Naive thymus-derived CD8-positive, alpha-beta T cell (primary cell): ENCODE measurements at regions of chr1 and their contacts with region 1.

Region 1: GRCh38 chr1:172380441-172381244 is 39.8 kb upstream of the C1orf105 start:
- DNase-seq: peak in 9 of 10 donors; percentile 19 to 80 (median 31)
- ATAC-seq: peak; percentile 97 to 98
- H3K4me3 Mint-ChIP-seq: peak overlapping the region; percentile 63 to 82 (median 71)
- H3K27ac Mint-ChIP-seq: peak overlapping the region; percentile 41 to 96 (median 92)
- H3K4me1 Mint-ChIP-seq: peaks cover 6 to 49% (median 33%) of the 10 kb centered on the region in 4 donors
- H3K27me3 Mint-ChIP-seq: no peaks in the 10 kb centered on the region

Region 2: DNA sequence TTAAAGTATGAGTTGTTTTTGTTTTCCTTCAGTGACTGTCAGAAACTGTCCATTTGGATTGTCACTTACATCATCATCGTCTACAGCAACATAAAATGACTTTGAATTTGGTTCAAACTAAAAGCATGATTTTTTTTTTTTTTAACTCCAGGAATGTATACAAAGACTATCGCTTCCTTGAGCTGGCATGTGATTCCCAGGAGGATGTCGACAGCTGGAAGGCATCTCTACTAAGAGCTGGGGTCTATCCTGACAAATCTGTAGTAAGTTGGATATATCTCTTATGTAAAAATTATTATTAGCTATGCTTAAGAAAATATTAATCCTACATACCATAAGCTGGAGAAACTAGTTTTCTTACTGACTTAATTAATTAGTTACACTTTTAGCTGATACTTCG is 72.1 kb before region 1 on chr1:
- POLR2A ChIA-PET with region 1: no interaction called
- DNase-seq: no peak
- ATAC-seq: no peak
- H3K4me3 Mint-ChIP-seq: no peak overlapping the region
- H3K27ac Mint-ChIP-seq: no peak overlapping the region
- H3K4me1 Mint-ChIP-seq: peaks cover 0 to 4% (median 2%) of the 10 kb centered on the region in 4 donors
- H3K27me3 Mint-ChIP-seq: no peaks in the 10 kb centered on the region

Region 3: DNA sequence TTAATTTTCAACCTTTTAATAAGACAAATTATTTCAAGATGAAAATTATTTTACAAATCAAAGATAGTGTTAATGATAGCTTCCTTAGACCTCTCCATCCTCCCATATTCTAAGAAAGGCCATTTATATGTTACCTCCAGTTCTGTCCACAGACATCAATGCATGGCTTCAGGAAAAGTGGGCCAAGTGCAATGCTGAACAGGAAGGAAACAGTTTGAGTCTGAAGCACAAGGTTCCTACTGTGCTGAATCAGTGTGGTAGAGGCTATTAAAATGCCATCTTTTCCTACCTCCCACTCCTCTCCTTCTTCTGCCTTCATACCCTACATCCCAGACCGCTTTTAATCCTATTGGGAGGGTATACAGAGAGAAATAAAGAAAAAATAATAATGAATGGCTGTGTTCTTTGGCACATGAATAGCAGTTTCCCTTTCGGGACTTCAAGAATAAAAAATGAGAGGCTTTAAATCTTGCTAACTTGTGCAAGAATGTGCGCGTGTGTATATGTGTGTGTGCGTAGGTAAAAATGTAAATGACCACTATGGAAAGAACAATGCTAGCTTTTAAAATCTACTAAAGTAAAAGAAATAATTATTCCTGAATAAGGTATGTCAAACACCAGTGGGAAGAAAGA is 22.8 kb before region 1 on chr1:
- POLR2A ChIA-PET with region 1: interaction called, 11 read pairs
- DNase-seq: no peak
- ATAC-seq: peak; percentile 37 to 46
- H3K4me3 Mint-ChIP-seq: peak overlapping the region; percentile 38 to 75 (median 66)
- H3K27ac Mint-ChIP-seq: peak overlapping the region; percentile 4 to 94 (median 82)
- H3K4me1 Mint-ChIP-seq: peaks cover 17 to 46% (median 43%) of the 10 kb centered on the region in 4 donors
- H3K27me3 Mint-ChIP-seq: no peaks in the 10 kb centered on the region

Region 4: GRCh38 chr1:172394141-172394751 is 13.6 kb after region 1 on chr1:
- POLR2A ChIA-PET with region 1: interaction called, 37 read pairs
- DNase-seq: peak in 9 of 10 donors; percentile 23 to 84 (median 62)
- ATAC-seq: peak; percentile 97 to 99
- H3K4me3 Mint-ChIP-seq: peak overlapping the region; percentile 66 to 82 (median 78)
- H3K27ac Mint-ChIP-seq: peak overlapping the region; percentile 94 to 100 (median 96)
- H3K4me1 Mint-ChIP-seq: peaks cover 24 to 76% (median 57%) of the 10 kb centered on the region in 4 donors
- H3K27me3 Mint-ChIP-seq: no peaks in the 10 kb centered on the region

Region 5: GRCh38 chr1:172414331-172414730 is 33.7 kb after region 1 on chr1:
- POLR2A ChIA-PET with region 1: no interaction called
- DNase-seq: no peak
- ATAC-seq: no peak
- H3K4me3 Mint-ChIP-seq: no peak overlapping the region
- H3K27ac Mint-ChIP-seq: no peak overlapping the region
- H3K4me1 Mint-ChIP-seq: peaks cover 0 to 9% (median 3%) of the 10 kb centered on the region in 4 donors
- H3K27me3 Mint-ChIP-seq: no peaks in the 10 kb centered on the region